Activated T-helper 2 cell treated with anti-CD3 and anti-CD28 coated beads, Interferon-gamma antibody, Interleukin-2, Interleukin-4, amounts not matched to agents 10 μg/mL and 5 μg/mL and 100 μg/mL, durations not matched to agents 14 hours and 24 hours and 36 hours (primary cell): ENCODE measurements at regions of chr18 and their contacts with region 1.

Region 1: DNA sequence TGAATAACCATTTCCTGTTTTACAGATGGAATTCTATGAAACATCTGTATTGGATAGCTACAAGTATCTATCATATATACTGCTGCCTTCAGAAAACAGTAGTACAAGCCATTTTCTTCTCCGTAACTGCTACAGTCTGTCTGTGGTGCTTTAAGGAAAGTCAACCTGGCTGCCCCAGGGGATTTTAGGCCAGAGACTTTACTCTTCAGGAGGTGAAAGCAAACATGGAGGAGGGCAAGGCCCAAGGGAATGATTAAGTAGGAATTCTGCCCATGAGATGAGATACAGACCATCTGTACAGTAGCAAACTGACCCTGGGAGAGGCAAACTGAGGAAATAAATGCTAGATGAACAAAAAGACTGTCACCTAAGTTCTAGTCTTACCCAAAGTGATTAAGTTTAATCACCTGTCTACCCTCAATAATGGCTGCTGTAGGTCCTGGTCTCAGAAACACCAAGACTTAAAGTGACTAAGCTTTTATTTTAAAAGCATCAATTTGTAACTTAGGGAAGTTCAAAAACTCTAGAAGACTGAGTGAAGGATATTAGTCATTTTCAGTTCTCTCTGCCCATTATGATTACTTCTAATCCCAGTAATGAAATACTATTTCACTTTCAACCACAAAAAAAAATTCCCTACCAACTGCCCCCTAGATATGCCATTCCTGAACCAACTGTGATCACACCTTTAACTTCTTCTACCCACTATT is 14.8 kb downstream of the MBD2 start:
- DNase-seq: no peak
- H3K4me3 Mint-ChIP-seq: peak overlapping the region; percentile 53
- H3K27ac Mint-ChIP-seq: peak overlapping the region; percentile 84
- H3K4me1 Mint-ChIP-seq: peaks cover 59% of the 10 kb centered on the region
- H3K27me3 Mint-ChIP-seq: no peaks in the 10 kb centered on the region

Region 2: GRCh38 chr18:54173980-54174630 is 35.5 kb before region 1 on chr18:
- intact Hi-C with region 1: loop called (anchors 1 kb)
- DNase-seq: no peak
- H3K4me3 Mint-ChIP-seq: peak overlapping the region; percentile 41
- H3K27ac Mint-ChIP-seq: peak overlapping the region; percentile 94
- H3K4me1 Mint-ChIP-seq: peaks cover 61% of the 10 kb centered on the region
- H3K27me3 Mint-ChIP-seq: no peaks in the 10 kb centered on the region

Region 3: DNA sequence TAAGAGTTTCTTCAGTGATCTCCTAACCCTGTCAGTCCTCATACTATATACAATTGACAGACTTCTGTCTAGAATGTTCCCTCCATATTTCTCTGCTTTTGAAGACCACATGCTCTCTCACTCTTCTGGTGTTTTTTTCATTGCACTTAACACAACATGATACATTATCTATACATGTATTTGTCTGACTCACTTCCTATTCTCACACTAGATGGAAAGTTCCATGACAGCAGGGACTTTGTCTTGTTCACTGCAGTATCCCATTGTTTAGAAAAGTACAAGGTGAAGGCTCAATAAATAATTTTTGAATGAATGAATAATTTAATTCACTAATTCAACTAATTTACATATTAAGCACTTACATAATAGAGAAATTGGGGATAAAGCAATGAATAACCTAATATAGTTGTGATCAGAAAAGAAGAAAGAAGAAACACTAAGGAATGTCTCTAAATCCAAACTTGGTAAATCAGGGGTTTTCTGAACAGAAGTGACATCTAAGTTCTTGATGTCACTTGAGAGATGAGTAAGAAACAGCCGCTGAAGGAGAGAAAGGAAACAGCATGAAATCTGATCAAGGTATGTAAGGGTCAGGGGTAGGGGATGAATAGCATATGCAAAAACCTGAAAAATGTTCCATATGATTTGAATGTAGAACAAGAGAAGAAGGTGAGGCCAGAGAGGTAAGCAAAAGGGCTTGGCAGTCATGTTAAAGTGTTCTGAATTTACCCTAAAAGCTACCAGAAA is 27.6 kb before region 1 on chr18:
- intact Hi-C with region 1: loop called (anchors 1 kb)
- DNase-seq: no peak
- H3K4me3 Mint-ChIP-seq: no peak overlapping the region
- H3K27ac Mint-ChIP-seq: no peak overlapping the region
- H3K4me1 Mint-ChIP-seq: peaks cover 11% of the 10 kb centered on the region
- H3K27me3 Mint-ChIP-seq: no peaks in the 10 kb centered on the region

Region 4: DNA sequence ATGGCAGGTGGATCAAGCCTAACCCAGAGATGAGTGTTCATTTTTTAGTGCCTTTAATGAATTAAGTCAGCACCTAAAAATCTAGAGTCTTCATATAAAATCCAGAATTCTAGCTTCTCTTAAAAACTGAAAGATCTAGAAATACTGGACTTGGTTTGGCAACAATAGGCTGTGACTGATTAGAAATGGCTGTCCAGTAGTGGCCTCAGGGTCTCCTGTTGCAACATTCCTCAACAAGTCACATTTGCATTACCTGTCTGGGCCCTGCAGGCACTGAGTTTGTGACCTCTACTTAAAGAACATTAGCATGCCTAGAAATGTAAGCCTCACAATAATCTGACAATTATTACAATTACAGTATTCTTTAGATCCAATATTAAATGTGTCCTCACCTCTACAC is 18.3 kb before region 1 on chr18:
- intact Hi-C with region 1: loop called (anchors 2 kb)
- DNase-seq: no peak
- H3K4me3 Mint-ChIP-seq: no peak overlapping the region
- H3K27ac Mint-ChIP-seq: no peak overlapping the region
- H3K4me1 Mint-ChIP-seq: peaks cover 8% of the 10 kb centered on the region
- H3K27me3 Mint-ChIP-seq: no peaks in the 10 kb centered on the region

Region 5: GRCh38 chr18:54415086-54415485 is 205.5 kb after region 1 on chr18:
- intact Hi-C with region 1: no loop called
- DNase-seq: no peak
- H3K4me3 Mint-ChIP-seq: no peak overlapping the region
- H3K27ac Mint-ChIP-seq: no peak overlapping the region
- H3K4me1 Mint-ChIP-seq: no peaks in the 10 kb centered on the region
- H3K27me3 Mint-ChIP-seq: peaks cover 9% of the 10 kb centered on the region